ENCODE measurements at regions of chr7 and their contacts with region 1.

Region 1: GRCh38 chr7:131071786-131072504 is 255.7 kb upstream of the MKLN1 start:
- DNase-seq: peak; percentile 38
- ATAC-seq: no peak
- H3K4me3 ChIP-seq: no peak overlapping the region
- H3K27ac ChIP-seq: no peak overlapping the region
- H3K4me1 ChIP-seq: peaks cover 19% of the 10 kb centered on the region
- H3K27me3 ChIP-seq: no peaks in the 10 kb centered on the region
- CTCF ChIP-seq: peak; percentile 46
- POLR2A ChIP-seq: no peak
- RAD21 ChIP-seq: peak; percentile 27; the same call in 1 of the 2 replicates

Region 2: GRCh38 chr7:130334274-130334673 is 737.7 kb before region 1 on chr7:
- CTCF ChIA-PET with region 1: no interaction called
- POLR2A ChIA-PET with region 1: no interaction called
- dilution Hi-C with region 1: no loop called
- in situ Hi-C with region 1: no loop called
- intact Hi-C with region 1: no loop called
- DNase-seq: peak; percentile 22
- ATAC-seq: peak; percentile 29
- H3K4me3 ChIP-seq: no peak overlapping the region
- H3K27ac ChIP-seq: no peak overlapping the region
- H3K4me1 ChIP-seq: no peaks in the 10 kb centered on the region
- H3K27me3 ChIP-seq: no peaks in the 10 kb centered on the region
- CTCF ChIP-seq: no peak
- POLR2A ChIP-seq: no peak
- RAD21 ChIP-seq: no peak

Region 3: GRCh38 chr7:130922206-130923112 is 149.5 kb before region 1 on chr7:
- CTCF ChIA-PET with region 1: no interaction called
- POLR2A ChIA-PET with region 1: interaction called, 17 read pairs
- dilution Hi-C with region 1: no loop called
- in situ Hi-C with region 1: no loop called
- intact Hi-C with region 1: no loop called
- DNase-seq: no peak
- ATAC-seq: no peak
- H3K4me3 ChIP-seq: no peak overlapping the region
- H3K27ac ChIP-seq: peak overlapping the region; percentile 81
- H3K4me1 ChIP-seq: peaks cover 39% of the 10 kb centered on the region
- H3K27me3 ChIP-seq: no peaks in the 10 kb centered on the region
- CTCF ChIP-seq: no peak
- POLR2A ChIP-seq: no peak
- RAD21 ChIP-seq: no peak

Region 4: GRCh38 chr7:131164025-131164899 is 92.3 kb after region 1 on chr7:
- CTCF ChIA-PET with region 1: no interaction called
- POLR2A ChIA-PET with region 1: no interaction called
- dilution Hi-C with region 1: no loop called
- in situ Hi-C with region 1: no loop called
- intact Hi-C with region 1: loop called (anchors 5 kb)
- DNase-seq: peak; percentile 81
- ATAC-seq: peak; percentile 22; the same call in 1 of the 2 replicates
- H3K4me3 ChIP-seq: no peak overlapping the region
- H3K27ac ChIP-seq: no peak overlapping the region; the same call in 1 of the 2 replicates
- H3K4me1 ChIP-seq: peaks cover 10% of the 10 kb centered on the region; the same call in 1 of the 2 replicates
- H3K27me3 ChIP-seq: no peaks in the 10 kb centered on the region
- CTCF ChIP-seq: no peak
- POLR2A ChIP-seq: no peak
- RAD21 ChIP-seq: no peak

Region 5: GRCh38 chr7:131327626-131328376 is 255.9 kb after region 1 on chr7 and contains the start of gene MKLN1:
- CTCF ChIA-PET with region 1: no interaction called
- POLR2A ChIA-PET with region 1: no interaction called
- dilution Hi-C with region 1: no loop called
- in situ Hi-C with region 1: no loop called
- intact Hi-C with region 1: loop called (anchors 5 kb)
- DNase-seq: peak; percentile 85
- ATAC-seq: peak; percentile 95
- H3K4me3 ChIP-seq: peak within 1 kb of the TSS; percentile 96
- H3K27ac ChIP-seq: peak within 1 kb of the TSS; percentile 100
- H3K4me1 ChIP-seq: peaks cover 7% of the 10 kb centered on the region; the same call in 1 of the 2 replicates
- H3K27me3 ChIP-seq: no peaks in the 10 kb centered on the region
- CTCF ChIP-seq: no peak
- POLR2A ChIP-seq: peak; percentile 93
- RAD21 ChIP-seq: no peak; the same call in 1 of the 2 replicates
- total RNA-seq, gene MKLN1: 52.0 and 65.8 TPM in 2 replicates

Region 6: DNA sequence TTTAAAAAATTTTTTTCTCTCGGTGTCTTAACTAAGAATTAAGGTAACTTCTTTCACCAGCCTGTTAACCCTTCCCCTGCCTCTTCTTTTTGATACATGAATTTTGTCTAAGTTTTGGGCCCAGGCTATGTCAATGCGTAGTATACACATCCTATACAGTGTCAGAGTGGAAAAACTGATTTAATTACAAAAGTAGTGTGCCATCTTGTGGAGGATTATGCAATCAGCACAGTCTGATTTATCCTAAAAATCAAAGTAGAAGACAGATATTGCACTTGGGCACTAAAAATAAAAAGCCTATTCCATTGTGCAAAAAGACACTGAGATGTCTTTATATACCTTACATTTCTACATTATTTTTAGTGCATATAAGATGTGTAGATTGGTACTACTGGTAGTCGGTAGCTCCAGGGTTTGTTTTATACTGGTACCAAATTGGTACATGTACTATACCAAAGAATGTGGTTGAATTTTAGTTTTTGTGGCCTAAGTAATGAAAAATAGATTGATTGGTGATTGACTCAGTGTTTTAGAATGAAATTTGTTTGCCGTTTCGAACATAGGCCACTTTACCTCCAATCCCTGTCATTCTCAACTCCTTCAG is 352.4 kb after region 1 on chr7:
- CTCF ChIA-PET with region 1: no interaction called
- POLR2A ChIA-PET with region 1: no interaction called
- dilution Hi-C with region 1: no loop called
- in situ Hi-C with region 1: loop called (anchors 10 kb)
- intact Hi-C with region 1: loop called (anchors 1 kb)
- DNase-seq: peak; percentile 58
- ATAC-seq: peak; percentile 87
- H3K4me3 ChIP-seq: no peak overlapping the region
- H3K27ac ChIP-seq: no peak overlapping the region
- H3K4me1 ChIP-seq: no peaks in the 10 kb centered on the region
- H3K27me3 ChIP-seq: no peaks in the 10 kb centered on the region
- CTCF ChIP-seq: peak; percentile 64
- POLR2A ChIP-seq: no peak
- RAD21 ChIP-seq: peak; percentile 66

Measured in IMR-90 (cell line).